Prostate gland (tissue), 2 donors: ENCODE measurements at regions of chr17 and their contacts with region 1.

Region 1: GRCh38 chr17:63406689-63407330 is 39.3 kb downstream of the CYB561 start:
- DNase-seq: peak; percentile 85
- H3K4me3 ChIP-seq: no peak overlapping the region
- H3K27ac ChIP-seq: no peak overlapping the region
- H3K4me1 ChIP-seq: no peaks in the 10 kb centered on the region
- H3K27me3 ChIP-seq: no peaks in the 10 kb centered on the region
- CTCF ChIP-seq: peak; percentile 46 to 86 (median 78)
- POLR2A ChIP-seq: no peak

Region 2: GRCh38 chr17:63082273-63082993 is 324.4 kb before region 1 on chr17:
- intact Hi-C with region 1: loop called (anchors 5 kb)
- DNase-seq: no peak
- H3K4me3 ChIP-seq: no peak overlapping the region
- H3K27ac ChIP-seq: no peak overlapping the region
- H3K4me1 ChIP-seq: peaks cover 3% of the 10 kb centered on the region
- H3K27me3 ChIP-seq: no peaks in the 10 kb centered on the region
- CTCF ChIP-seq: peak in 3 of 4 experiments; percentile 35 to 54 (median 47)
- POLR2A ChIP-seq: no peak

Region 3: GRCh38 chr17:63514974-63515373 is 108.2 kb after region 1 on chr17:
- intact Hi-C with region 1: no loop called
- DNase-seq: no peak
- H3K4me3 ChIP-seq: no peak overlapping the region
- H3K27ac ChIP-seq: no peak overlapping the region
- H3K4me1 ChIP-seq: no peaks in the 10 kb centered on the region
- H3K27me3 ChIP-seq: no peaks in the 10 kb centered on the region
- CTCF ChIP-seq: no peak
- POLR2A ChIP-seq: no peak